ENCODE measurements at regions of chr17 and their contacts with region 1.

Region 1: GRCh38 chr17:17859909-17860765 is 23.4 kb upstream of the SREBF1 start:
- DNase-seq: peak in 1 of 2 experiments; percentile 72
- H3K4me3 ChIP-seq: no peak overlapping the region
- H3K27ac ChIP-seq: no peak overlapping the region
- H3K4me1 ChIP-seq: peaks cover 19% of the 10 kb centered on the region
- H3K27me3 ChIP-seq: no peaks in the 10 kb centered on the region
- CTCF ChIP-seq: peak; percentile 98

Region 2: GRCh38 chr17:17356149-17356930 is 503.8 kb before region 1 on chr17:
- CTCF ChIA-PET with region 1: no interaction called
- POLR2A ChIA-PET with region 1: no interaction called
- intact Hi-C with region 1: loop called (anchors 5 kb)
- DNase-seq: peak; percentile 65 to 82
- H3K4me3 ChIP-seq: no peak overlapping the region
- H3K27ac ChIP-seq: no peak overlapping the region
- H3K4me1 ChIP-seq: no peaks in the 10 kb centered on the region
- H3K27me3 ChIP-seq: peaks cover 22% of the 10 kb centered on the region
- CTCF ChIP-seq: peak; percentile 100

Region 3: GRCh38 chr17:17774009-17774881 is 85.9 kb before region 1 on chr17:
- CTCF ChIA-PET with region 1: no interaction called
- POLR2A ChIA-PET with region 1: no interaction called
- intact Hi-C with region 1: loop called (anchors 1 kb)
- DNase-seq: peak in 1 of 2 experiments; percentile 68
- H3K4me3 ChIP-seq: no peak overlapping the region
- H3K27ac ChIP-seq: peak overlapping the region; percentile 51
- H3K4me1 ChIP-seq: peaks cover 16% of the 10 kb centered on the region; the same call in 1 of the 2 replicates
- H3K27me3 ChIP-seq: no peaks in the 10 kb centered on the region
- CTCF ChIP-seq: peak; percentile 61

Region 4: DNA sequence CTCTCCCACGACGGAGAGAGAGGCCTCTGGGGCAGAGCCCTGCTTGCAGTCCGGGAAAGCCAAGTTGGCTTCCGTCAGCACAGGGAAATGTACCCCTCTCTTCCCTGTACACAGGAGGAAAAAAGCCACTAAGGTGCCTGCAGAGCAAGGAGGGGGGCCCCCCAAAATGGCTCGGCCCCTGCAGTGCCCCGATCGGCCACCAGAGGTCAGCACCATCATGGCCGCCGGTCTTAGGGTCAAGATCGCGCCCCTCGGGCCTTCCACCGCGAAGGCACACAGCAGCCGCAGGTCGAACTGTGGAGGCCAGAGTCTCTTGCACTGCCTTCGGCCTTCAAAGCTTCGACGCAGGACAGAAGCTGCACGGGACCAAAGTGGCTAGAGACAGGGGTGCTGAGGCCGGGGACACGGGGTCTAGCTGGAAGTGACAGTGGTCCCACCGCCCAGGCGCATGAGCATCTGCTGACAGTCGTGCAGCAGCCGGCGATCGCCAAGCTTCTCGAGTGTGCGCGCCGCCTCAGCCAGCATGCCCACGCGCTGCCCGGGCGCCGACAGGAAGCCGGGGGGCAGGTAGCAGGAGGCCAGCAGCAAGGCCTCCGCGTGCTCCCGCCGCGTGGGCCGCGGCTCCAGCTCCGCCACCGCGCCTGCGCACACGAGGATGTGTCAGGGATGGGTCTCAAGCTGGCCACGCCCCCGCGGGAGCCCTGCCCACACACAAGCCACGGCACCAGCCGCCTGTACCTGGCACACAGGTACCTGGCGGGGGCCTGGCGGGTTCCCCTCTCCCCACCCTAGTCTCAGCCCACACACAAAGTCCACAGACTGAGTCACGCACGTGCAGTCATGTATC is 47.7 kb before region 1 on chr17:
- CTCF ChIA-PET with region 1: interaction called, 10 read pairs
- POLR2A ChIA-PET with region 1: no interaction called
- intact Hi-C with region 1: loop called (anchors 1 kb)
- DNase-seq: peak; percentile 49 to 76
- H3K4me3 ChIP-seq: no peak overlapping the region
- H3K27ac ChIP-seq: 0 out of 2 replicates have a peak overlapping the region, but pooled peaks have one; percentile 8
- H3K4me1 ChIP-seq: peaks cover 16% of the 10 kb centered on the region; the same call in 1 of the 2 replicates
- H3K27me3 ChIP-seq: no peaks in the 10 kb centered on the region
- CTCF ChIP-seq: peak; percentile 100

Region 5: DNA sequence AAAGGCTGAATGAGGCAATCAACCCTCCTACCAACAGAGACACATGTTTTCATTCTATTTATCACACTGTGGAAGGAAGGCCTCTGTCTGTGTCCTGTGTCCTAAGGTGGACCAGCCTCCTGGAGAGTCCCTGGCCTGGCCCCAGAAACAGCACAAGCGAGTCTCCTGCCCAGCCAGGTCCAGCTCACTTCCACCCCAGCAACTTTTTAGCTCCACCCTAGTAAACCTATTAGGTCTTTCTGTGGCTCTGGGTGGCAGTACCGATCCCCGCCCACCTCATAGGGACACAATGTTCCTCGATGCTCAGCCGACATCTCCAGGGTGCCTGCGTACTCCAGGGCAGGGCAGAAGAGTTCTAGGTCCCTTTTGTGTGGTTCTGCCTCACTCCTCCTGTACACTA is 123.2 kb after region 1 on chr17:
- CTCF ChIA-PET with region 1: interaction called, 14 read pairs
- POLR2A ChIA-PET with region 1: no interaction called
- intact Hi-C with region 1: no loop called
- DNase-seq: no peak
- H3K4me3 ChIP-seq: no peak overlapping the region
- H3K27ac ChIP-seq: no peak overlapping the region
- H3K4me1 ChIP-seq: no peaks in the 10 kb centered on the region; the same call in 1 of the 2 replicates
- H3K27me3 ChIP-seq: no peaks in the 10 kb centered on the region
- CTCF ChIP-seq: no peak

Measured in PC-9 (cell line).